Activated CD8-positive, alpha-beta memory T cell treated with anti-CD3 and anti-CD28 coated beads, Interleukin-2, amount 10 ng/mL, durations not matched to agents 7 days and 5 days (primary cell): ENCODE measurements at regions of chr12 and their contacts with region 1.

Region 1: GRCh38 chr12:109775172-109775881 is 57.9 kb downstream of the TRPV4 start:
- DNase-seq: peak; percentile 80
- ATAC-seq: peak; percentile 81
- H3K4me3 Mint-ChIP-seq: no peak overlapping the region
- H3K27ac Mint-ChIP-seq: no peak overlapping the region
- H3K4me1 Mint-ChIP-seq: peaks cover 10% of the 10 kb centered on the region
- H3K27me3 Mint-ChIP-seq: peaks cover 6% of the 10 kb centered on the region

Region 2: DNA sequence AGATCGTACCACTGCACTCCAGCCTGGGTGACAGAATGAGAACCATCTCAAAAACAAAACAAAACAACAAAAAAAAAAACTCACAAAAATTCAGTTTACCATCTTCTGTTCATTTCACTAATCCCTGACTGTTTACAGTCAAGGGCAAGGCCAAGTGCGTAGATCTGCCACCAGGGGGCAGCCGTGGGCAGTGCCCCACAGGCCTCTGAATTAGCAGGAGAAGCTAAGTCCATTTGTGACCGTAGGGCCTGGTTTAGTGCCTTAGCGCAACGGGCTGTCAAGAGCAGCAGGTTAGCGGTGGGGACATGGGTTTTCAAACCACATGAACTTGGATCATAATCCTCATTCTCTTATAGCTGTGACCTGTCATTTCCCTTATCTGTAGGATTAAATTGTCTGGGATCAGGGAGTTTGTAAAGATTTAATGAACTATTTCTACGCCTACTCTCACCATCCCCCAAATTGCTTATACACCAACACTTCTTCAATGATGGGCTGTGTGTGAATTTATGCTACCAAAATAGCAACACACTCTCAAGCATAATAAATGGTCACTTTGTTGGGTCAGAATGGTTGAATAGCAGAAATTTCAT is 347.2 kb before region 1 on chr12:
- CTCF ChIA-PET with region 1: interaction called, 13 read pairs
- DNase-seq: peak; percentile 83
- ATAC-seq: peak; percentile 84
- H3K4me3 Mint-ChIP-seq: no peak overlapping the region
- H3K27ac Mint-ChIP-seq: no peak overlapping the region
- H3K4me1 Mint-ChIP-seq: peaks cover 7% of the 10 kb centered on the region
- H3K27me3 Mint-ChIP-seq: peaks cover 3% of the 10 kb centered on the region

Region 3: DNA sequence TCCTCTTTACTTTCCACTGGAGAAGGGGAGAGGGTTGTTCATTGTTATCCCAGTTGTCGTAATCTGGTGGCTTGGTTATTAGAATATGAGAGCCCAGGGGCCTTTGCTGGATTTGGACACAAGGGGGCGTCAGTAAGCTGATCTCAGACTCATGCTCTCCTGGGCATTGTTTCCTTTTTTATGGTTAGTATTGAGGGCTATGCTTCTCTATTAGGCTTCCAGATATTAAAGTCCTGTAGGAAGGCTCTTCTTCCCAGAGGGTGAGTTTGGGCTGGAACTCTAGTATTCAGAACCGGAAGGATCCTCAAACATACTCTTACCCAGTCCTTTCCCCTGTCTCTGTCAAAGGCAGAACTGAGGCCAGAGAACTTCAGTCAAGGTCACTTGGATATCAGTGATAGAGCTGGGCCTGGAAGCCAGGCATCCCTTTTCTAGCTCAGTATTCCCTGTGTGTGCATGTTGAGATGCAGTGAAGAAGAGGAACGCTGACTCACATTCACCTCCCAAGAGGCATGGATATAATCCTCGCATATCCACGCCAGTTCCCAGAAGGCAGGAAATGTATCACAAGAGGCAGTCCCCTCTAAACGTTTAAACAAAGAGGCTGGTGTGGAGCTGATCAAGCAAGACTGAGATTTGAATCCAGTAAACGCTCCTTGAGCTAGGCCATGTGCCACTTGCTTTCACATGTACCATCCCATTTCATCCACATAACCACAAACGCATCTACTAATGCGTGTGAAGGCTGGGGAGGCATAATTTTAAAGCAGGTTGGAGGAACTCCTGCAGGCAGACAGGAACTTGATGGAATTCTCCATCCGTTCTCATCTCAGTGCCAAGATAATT is 256.3 kb before region 1 on chr12:
- CTCF ChIA-PET with region 1: interaction called, 47 read pairs
- DNase-seq: peak; percentile 69
- ATAC-seq: peak; percentile 73
- H3K4me3 Mint-ChIP-seq: no peak overlapping the region
- H3K27ac Mint-ChIP-seq: no peak overlapping the region
- H3K4me1 Mint-ChIP-seq: peaks cover 2% of the 10 kb centered on the region
- H3K27me3 Mint-ChIP-seq: no peaks in the 10 kb centered on the region

Region 4: GRCh38 chr12:109573029-109573913 is 202.1 kb before region 1 on chr12 and contains the starts of genes MMAB and MVK:
- CTCF ChIA-PET with region 1: interaction called, 11 read pairs
- DNase-seq: peak; percentile 100
- ATAC-seq: peak; percentile 97
- H3K4me3 Mint-ChIP-seq: peak within 1 kb of the TSS; percentile 85
- H3K27ac Mint-ChIP-seq: peak within 1 kb of the TSS; percentile 94
- H3K4me1 Mint-ChIP-seq: peaks cover 30% of the 10 kb centered on the region
- H3K27me3 Mint-ChIP-seq: no peaks in the 10 kb centered on the region
- total RNA-seq, gene MMAB: 35.4 to 40.9 TPM
- total RNA-seq, gene MVK: 21.7 to 27.4 TPM

Region 5: GRCh38 chr12:109597795-109598427 is 177.4 kb before region 1 on chr12:
- CTCF ChIA-PET with region 1: interaction called, 74 read pairs
- DNase-seq: peak; percentile 72
- ATAC-seq: peak; percentile 73
- H3K4me3 Mint-ChIP-seq: no peak overlapping the region
- H3K27ac Mint-ChIP-seq: no peak overlapping the region
- H3K4me1 Mint-ChIP-seq: peaks cover 26% of the 10 kb centered on the region
- H3K27me3 Mint-ChIP-seq: no peaks in the 10 kb centered on the region

Region 6: DNA sequence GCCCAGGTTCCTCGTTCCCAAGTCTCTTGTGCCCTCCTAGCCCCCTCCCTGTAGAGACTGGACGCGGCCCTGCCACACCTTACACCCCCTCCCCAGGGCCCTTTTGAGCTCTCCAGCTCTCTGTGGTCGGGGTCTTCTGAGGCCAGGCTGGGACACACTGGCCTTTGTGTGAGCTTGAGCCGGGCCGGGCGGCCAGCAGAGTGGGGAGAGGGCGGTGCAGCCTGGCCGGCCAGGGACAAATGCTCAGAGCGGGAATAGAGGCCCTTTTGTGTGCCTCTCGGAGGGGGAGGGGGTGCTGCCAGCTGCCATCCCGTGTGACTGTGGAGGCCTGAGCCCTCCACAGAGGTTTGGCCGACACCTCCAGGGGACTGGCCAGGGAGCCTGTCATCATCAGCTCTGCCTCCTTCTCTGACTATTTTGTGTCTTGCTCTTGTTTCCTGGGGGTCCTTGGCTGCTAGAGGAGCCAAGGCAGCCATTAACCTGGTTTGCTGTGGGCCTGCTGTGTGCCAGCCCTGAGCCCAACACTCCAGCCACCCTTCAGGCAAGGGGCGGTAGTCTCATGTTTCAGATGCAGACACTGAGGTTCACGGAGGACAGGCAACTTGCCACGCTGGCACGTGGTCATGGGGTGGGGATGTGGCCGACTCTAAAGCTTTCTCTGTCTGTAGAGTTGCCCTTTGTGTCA is 48.1 kb before region 1 on chr12:
- CTCF ChIA-PET with region 1: no interaction called
- DNase-seq: no peak
- ATAC-seq: no peak
- H3K4me3 Mint-ChIP-seq: no peak overlapping the region
- H3K27ac Mint-ChIP-seq: no peak overlapping the region
- H3K4me1 Mint-ChIP-seq: no peaks in the 10 kb centered on the region
- H3K27me3 Mint-ChIP-seq: no peaks in the 10 kb centered on the region

Region 7: DNA sequence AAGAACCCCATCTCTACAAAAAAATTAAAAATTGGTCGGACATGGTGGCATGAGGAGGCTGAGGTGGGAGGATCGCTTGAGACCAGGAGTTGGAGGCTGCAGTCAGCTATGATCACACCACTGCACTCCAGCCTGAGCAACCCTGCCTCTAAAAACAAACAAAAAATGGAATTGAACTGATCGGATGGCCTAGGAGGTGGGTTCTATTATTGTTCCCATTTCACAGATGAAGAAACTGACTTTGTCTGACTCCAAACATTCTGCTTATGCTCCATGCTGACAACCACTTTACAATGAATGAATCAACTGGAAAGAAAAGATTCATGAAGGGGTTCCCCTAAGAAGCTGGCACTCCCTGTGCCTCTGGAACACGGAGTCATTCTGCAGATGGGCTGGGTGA is 10.5 kb after region 1 on chr12:
- CTCF ChIA-PET with region 1: interaction called, 10 read pairs
- DNase-seq: no peak
- ATAC-seq: no peak
- H3K4me3 Mint-ChIP-seq: no peak overlapping the region
- H3K27ac Mint-ChIP-seq: no peak overlapping the region
- H3K4me1 Mint-ChIP-seq: no peaks in the 10 kb centered on the region
- H3K27me3 Mint-ChIP-seq: peaks cover 3% of the 10 kb centered on the region